ENCODE measurements at regions of chr12 and their contacts with region 1.

Region 1: GRCh38 chr12:68364893-68365725 is 32.9 kb upstream of the MDM1 start:
- DNase-seq: peak; percentile 81 to 94
- H3K4me3 ChIP-seq: peak overlapping the region; percentile 29 to 65 (median 50)
- H3K27ac ChIP-seq: peak overlapping the region; percentile 87 to 92
- H3K4me1 ChIP-seq: no peaks in the 10 kb centered on the region
- H3K27me3 ChIP-seq: no peaks in the 10 kb centered on the region
- CTCF ChIP-seq: no peak
- POLR2A ChIP-seq: peak; percentile 10

Region 2: DNA sequence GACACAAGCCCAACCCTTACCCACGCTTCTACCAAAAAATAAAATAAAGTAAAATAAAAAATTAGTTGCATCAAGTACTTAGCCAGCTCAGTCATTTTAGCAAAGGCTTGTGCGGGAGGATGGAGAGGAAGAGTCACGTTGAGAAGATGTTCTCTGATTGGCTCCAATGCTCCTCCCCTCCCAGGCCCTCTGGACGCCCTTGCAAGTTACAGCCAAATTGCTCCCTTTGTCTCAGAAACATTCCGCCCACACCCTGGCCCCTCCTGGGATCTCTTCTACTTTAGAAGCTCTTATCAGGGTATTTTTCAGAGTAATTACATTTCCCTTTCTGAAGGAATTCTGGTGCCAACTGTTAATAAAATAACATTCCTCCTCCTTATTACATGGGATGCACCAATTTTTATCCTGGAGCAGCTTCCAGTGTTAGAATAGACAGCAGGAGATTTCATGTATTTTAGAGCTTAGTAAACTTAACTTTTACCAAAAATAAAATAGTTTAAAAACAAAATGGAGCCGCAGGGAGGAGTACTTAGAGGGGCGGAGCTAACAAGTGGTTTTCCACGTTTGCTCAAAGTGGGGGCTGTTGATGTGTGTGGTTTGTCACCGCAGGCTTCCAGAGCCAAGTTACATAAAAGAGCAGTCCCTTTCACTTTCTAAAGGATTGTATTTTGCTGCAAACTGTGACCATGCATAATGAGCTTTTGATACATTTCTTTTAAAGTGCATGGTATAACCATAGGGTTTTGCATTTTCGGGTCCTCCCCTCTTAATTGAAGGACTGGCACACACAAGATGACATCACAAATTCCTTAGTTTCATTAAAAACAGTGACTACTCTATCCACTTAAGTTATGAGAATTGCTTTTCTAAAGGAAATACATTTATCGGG is 173.9 kb after region 1 on chr12:
- intact Hi-C with region 1: loop called (anchors 10 kb)
- DNase-seq: peak in 1 of 2 donors; percentile 30
- H3K4me3 ChIP-seq: peak overlapping the region; percentile 26 to 58 (median 37)
- H3K27ac ChIP-seq: peak overlapping the region; percentile 79 to 80
- H3K4me1 ChIP-seq: no peaks in the 10 kb centered on the region
- H3K27me3 ChIP-seq: no peaks in the 10 kb centered on the region
- CTCF ChIP-seq: no peak
- POLR2A ChIP-seq: no peak

Region 3: DNA sequence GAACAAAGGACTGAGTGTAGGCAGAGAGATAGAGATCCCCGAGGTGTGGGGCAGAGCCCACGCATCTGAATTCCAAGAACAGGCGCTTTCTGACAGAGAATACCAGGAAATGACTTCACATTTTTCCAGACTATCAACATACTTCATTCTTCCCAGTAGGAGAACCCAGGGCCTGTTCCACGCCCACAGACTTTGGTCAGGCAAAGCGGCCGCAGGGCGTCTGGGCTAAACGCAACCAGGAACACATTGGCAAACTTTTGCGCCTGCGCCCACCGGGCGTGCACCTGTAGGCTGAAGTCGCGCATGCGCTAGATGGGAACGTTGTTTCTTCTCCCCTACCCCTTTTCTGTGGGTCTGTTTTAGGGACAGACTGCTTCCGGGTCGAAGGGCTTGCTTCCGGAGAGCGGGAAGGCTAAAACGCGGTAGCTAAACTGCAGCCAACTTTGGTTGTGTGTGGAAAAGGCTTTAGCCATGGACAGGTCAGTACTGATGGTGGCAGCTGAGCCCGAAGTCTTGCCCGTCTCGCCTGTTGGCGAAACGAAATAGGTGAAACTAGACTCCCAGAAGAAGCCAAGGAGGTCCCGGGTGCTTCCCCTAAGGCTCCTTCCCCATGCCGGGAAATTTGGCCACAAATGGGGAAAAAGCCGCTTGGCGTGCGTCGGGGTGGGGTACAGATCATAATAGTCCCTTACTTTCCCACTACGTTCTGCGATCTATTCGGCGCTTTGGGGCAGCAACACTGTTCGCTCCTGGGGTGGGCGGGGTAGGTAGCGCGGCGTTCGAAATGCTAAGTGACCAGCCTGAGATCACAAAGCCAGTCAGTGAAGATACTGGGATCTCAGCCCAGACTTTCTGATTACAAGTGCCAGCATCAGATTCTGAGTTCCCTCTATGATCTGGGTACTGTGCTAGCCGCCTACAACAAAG is 321.7 kb after region 1 on chr12 and contains the start of gene NUP107:
- intact Hi-C with region 1: loop called (anchors 5 kb)
- DNase-seq: peak; percentile 99 to 100
- H3K4me3 ChIP-seq: peak within 1 kb of the TSS; percentile 77 to 91 (median 85)
- H3K27ac ChIP-seq: peak within 1 kb of the TSS; percentile 90 to 91
- H3K4me1 ChIP-seq: no peaks in the 10 kb centered on the region
- H3K27me3 ChIP-seq: no peaks in the 10 kb centered on the region
- CTCF ChIP-seq: peak; percentile 31 to 68 (median 40)
- POLR2A ChIP-seq: peak; percentile 54
- total RNA-seq, gene NUP107: 44.6 to 62.6 (median 58.7) TPM

Region 4: DNA sequence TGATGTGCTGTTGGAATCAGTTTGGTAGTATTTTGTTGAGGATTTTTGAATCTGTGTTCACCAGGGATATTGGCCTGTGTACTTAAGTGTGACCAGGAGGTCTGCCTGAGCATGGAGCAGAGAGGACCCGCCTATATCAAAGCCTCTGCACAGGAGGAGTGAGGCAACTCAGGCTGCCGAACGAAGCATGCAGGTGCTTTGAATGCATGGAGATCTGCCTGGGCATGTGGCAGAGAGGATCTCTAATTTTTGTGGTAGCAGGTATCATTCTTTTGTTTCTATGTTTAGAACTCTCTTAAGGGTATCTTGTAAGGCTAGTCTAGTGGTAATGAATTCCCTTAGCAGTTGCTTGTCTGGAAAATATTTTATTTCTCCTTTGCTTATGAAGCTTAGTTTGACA is 1400.4 kb after region 1 on chr12:
- intact Hi-C with region 1: no loop called
- DNase-seq: no peak
- H3K4me3 ChIP-seq: no peak overlapping the region
- H3K27ac ChIP-seq: no peak overlapping the region
- H3K4me1 ChIP-seq: no peaks in the 10 kb centered on the region
- H3K27me3 ChIP-seq: no peaks in the 10 kb centered on the region
- CTCF ChIP-seq: no peak
- POLR2A ChIP-seq: no peak